Psoas muscle (tissue), 8 donors: ENCODE measurements at regions of chr5 and their contacts with region 1.

Region 1: GRCh38 chr5:88268385-88269184 is at the start of gene TMEM161B:
- DNase-seq: peak; percentile 90 to 93
- ATAC-seq: peak; percentile 98 to 100 (median 100)
- H3K4me3 ChIP-seq: peak within 1 kb of the TSS; percentile 74
- H3K27ac ChIP-seq: peak within 1 kb of the TSS; percentile 73
- H3K4me1 ChIP-seq: peaks cover 31% of the 10 kb centered on the region
- H3K27me3 ChIP-seq: no peaks in the 10 kb centered on the region
- CTCF ChIP-seq: no peak
- total RNA-seq, gene TMEM161B: 5.1 to 10.2 (median 7.5) TPM

Region 2: DNA sequence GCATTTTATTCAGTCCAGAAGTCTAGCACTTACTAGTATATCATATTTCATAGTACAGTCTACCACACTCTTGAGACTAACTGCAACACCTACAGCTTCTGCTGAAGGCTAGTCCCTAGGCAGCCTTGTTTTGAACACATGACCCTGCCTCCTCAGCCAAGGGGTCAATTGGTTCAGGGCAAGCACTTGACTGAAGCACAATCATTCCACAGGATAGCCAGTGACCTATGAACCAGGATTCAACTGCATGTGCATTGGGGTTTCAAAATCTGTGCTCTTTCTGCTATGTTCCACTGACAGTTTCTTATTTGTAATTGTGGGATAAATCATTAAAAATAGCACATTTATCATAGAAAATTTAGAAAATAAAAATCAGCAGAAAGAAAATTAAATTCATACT is 186.7 kb before region 1 on chr5:
- intact Hi-C with region 1: no loop called
- DNase-seq: no peak
- ATAC-seq: no peak
- H3K4me3 ChIP-seq: no peak overlapping the region
- H3K27ac ChIP-seq: no peak overlapping the region
- H3K4me1 ChIP-seq: no peaks in the 10 kb centered on the region
- H3K27me3 ChIP-seq: peaks cover 0 to 4% (median 0%) of the 10 kb centered on the region in 3 donors
- CTCF ChIP-seq: no peak

Region 3: GRCh38 chr5:88113423-88113822 is 155.2 kb before region 1 on chr5:
- intact Hi-C with region 1: no loop called
- DNase-seq: no peak
- ATAC-seq: no peak
- H3K4me3 ChIP-seq: no peak overlapping the region
- H3K27ac ChIP-seq: no peak overlapping the region
- H3K4me1 ChIP-seq: no peaks in the 10 kb centered on the region
- H3K27me3 ChIP-seq: no peaks in the 10 kb centered on the region
- CTCF ChIP-seq: no peak

Region 4: GRCh38 chr5:88248743-88249540 is 19.6 kb before region 1 on chr5:
- intact Hi-C with region 1: loop called in 1 of 2 experiments (anchors 2 kb)
- DNase-seq: no peak
- ATAC-seq: no peak
- H3K4me3 ChIP-seq: no peak overlapping the region
- H3K27ac ChIP-seq: no peak overlapping the region
- H3K4me1 ChIP-seq: peaks cover 8% of the 10 kb centered on the region
- H3K27me3 ChIP-seq: no peaks in the 10 kb centered on the region
- CTCF ChIP-seq: no peak